ENCODE measurements at regions of chr14 and their contacts with region 1.

Region 1: GRCh38 chr14:61837336-61838229 is 75.4 kb downstream of the SNAPC1 start:
- DNase-seq: peak; percentile 81 to 87
- ATAC-seq: peak; percentile 93
- H3K4me3 ChIP-seq: no peak overlapping the region
- H3K27ac ChIP-seq: no peak overlapping the region
- H3K4me1 ChIP-seq: no peaks in the 10 kb centered on the region
- H3K27me3 ChIP-seq: no peaks in the 10 kb centered on the region

Region 2: DNA sequence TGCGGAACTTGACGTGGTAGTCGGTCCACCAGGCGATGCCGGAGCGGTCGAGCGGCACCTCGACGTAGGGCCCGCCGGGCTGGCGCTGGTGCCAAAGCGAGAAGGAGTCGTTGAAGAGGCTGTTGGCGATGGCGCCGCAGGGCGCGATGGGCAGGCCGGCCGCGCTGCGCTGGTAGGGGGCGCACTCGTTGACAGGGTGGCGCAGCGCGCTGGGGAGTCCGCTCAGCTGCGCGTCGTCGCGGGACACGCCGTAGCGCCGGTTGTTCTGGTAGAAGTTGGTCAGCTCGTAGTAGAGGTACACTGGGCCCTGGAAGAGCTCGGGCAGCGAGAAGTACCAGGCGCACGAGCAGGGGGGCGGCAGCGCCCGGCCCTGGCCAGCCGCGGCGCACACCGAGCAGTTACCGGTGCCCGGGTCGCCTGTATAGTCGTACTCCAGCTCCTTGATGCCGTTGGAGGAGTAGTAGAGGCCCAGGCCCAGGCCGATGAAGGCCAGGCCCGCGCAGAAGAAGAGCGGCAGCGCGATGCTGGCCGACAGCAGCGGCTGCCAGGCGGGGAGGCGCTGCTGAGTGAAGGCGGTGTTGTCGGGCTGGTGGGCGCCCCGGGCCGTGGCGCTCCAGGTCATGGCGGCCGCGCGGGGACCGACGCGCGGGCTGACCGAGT is 556.9 kb before region 1 on chr14:
- intact Hi-C with region 1: loop called in 1 of 2 experiments (anchors 10 kb)
- DNase-seq: peak; percentile 74 to 90
- ATAC-seq: peak; percentile 84
- H3K4me3 ChIP-seq: peak overlapping the region; percentile 24 to 80
- H3K27ac ChIP-seq: peak overlapping the region; percentile 89 to 90
- H3K4me1 ChIP-seq: no peaks in the 10 kb centered on the region
- H3K27me3 ChIP-seq: no peaks in the 10 kb centered on the region

Region 3: DNA sequence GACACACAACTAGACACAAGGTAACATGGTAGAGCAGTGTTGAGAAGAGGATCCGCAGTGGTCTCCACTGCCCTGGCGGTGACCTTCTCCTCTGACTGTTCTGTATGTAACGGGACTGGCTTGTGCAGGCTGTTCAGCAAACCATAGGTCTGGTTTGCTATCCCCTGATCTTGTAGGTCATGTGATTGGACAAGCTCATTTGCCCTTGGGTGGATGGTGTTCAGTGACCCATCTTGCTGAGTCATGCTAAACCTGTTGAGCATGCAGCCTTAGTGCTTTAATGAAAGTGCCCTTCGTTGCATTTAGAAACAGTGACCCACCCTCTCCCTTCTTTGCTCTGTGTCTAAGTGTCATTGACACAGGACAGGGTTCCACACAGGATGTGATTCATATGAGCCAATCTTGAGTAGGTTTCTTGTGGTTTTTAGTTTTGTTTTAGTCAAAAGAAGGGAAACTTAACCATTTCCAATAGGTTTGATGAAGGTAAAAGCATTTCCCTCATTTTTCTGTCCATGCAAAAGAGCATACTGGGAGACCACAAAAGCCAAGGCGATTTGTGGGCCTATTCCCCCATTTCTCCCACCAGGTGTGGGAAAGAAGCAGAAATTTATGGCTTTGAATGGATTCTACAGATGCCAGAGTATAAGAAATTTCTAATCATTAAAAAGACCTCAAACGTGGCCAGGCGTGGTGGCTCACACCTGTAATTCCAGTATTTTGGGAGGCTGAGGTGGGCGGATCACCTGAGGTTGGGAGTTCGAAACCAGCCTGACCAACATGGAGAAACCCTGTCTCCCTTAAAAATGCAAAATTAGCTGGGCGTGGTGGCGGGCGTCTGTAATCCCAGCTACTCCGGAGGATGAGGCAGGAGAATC is 174.9 kb before region 1 on chr14:
- intact Hi-C with region 1: no loop called
- DNase-seq: no peak
- ATAC-seq: peak; percentile 22
- H3K4me3 ChIP-seq: no peak overlapping the region
- H3K27ac ChIP-seq: peak overlapping the region in 1 of 2 donors; percentile 66
- H3K4me1 ChIP-seq: peaks cover 2 to 5% of the 10 kb centered on the region in 2 donors
- H3K27me3 ChIP-seq: no peaks in the 10 kb centered on the region

Region 4: DNA sequence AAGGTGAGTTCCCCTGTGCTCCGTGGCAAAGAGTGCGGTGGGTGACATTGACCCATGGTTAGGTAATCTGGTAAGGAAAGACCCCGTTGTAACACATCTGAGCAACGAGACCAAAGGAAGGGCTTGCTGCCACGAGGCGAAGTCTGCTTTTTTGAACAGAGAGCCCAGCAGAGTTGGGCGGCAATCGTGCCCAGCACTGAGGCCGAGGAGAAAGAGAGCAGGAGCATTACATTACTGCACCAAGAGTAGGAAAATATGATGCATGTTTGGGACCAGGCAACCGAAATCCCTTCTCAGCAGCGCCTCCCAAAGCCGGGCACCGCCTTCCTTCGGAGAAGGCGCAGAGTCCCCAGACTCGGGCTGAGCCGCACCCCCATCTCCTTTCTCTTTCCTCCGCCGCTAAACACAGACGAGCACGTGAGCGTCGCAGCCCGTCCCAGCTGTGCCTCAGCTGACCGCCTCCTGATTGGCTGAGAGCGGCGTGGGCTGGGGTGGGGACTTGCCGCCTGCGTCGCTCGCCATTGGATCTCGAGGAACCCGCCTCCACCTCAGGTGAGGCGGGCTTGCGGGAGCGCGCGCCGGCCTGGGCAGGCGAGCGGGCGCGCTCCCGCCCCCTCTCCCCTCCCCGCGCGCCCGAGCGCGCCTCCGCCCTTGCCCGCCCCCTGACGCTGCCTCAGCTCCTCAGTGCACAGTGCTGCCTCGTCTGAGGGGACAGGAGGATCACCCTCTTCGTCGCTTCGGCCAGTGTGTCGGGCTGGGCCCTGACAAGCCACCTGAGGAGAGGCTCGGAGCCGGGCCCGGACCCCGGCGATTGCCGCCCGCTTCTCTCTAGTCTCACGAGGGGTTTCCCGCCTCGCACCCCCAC is 142.5 kb before region 1 on chr14 and contains the start of gene HIF1A:
- intact Hi-C with region 1: no loop called
- DNase-seq: peak; percentile 98 to 99
- ATAC-seq: peak; percentile 98
- H3K4me3 ChIP-seq: peak within 1 kb of the TSS; percentile 82 to 84
- H3K27ac ChIP-seq: peak within 1 kb of the TSS in 1 of 2 donors; percentile 95
- H3K4me1 ChIP-seq: peaks cover 0 to 8% of the 10 kb centered on the region in 2 donors
- H3K27me3 ChIP-seq: peaks cover 0 to 2% of the 10 kb centered on the region in 2 donors
- total RNA-seq, gene HIF1A: 164 to 173 TPM

Region 5: GRCh38 chr14:61774861-61775260 is 62.7 kb before region 1 on chr14:
- intact Hi-C with region 1: loop called in 1 of 2 experiments (anchors 10 kb)
- DNase-seq: no peak
- ATAC-seq: no peak
- H3K4me3 ChIP-seq: no peak overlapping the region
- H3K27ac ChIP-seq: no peak overlapping the region
- H3K4me1 ChIP-seq: no peaks in the 10 kb centered on the region
- H3K27me3 ChIP-seq: no peaks in the 10 kb centered on the region

Region 6: GRCh38 chr14:61894452-61895077 is 57.0 kb after region 1 on chr14:
- intact Hi-C with region 1: no loop called
- DNase-seq: peak in 1 of 2 donors; percentile 67
- ATAC-seq: no peak
- H3K4me3 ChIP-seq: no peak overlapping the region
- H3K27ac ChIP-seq: no peak overlapping the region
- H3K4me1 ChIP-seq: no peaks in the 10 kb centered on the region
- H3K27me3 ChIP-seq: no peaks in the 10 kb centered on the region

Measured in aorta (tissue), 5 donors.